GM12878 (cell line): ENCODE measurements at regions of chr19 and their contacts with region 1.

Region 1: DNA sequence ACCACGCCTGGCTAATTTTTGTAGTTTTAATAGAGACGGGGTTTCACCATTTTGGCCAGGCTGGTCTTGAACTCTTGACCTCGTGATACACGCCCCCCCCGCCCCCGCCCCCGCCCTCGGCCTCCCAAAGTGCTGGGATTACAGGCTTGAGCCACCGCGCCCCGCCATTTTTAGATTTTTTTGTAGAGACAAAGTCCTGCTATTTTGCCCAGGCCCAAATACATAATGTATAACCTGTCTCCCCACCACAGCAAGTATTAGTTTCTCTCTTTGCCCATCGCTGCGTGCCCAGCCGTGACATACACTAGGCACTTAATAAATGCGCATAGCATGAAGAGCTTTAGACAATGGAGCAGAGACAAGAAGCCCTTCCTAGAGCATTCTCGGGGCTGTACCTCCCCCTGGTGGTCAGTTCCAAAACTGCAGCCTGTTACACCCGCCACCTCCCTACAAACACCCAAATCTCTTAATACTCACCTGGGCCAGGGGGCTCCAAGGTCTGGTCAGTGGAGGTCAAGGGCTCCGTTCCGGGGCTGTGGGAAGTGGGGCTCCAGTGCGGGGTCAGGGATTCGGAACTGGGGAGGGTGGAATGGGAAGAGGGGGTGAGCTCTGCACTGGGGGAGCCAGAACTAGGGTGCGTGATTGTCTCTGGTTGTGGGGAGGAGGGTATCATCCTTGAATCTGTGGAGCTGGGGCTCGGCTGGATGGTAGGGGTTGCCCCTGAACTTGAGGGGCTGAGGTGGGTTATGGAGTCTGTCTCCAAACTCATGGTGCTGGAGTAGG is 22.5 kb downstream of the IQCN start:
- DNase-seq: peak; percentile 40
- ATAC-seq: peak; percentile 92
- H3K4me3 ChIP-seq: no peak overlapping the region
- H3K27ac ChIP-seq: no peak overlapping the region
- H3K4me1 ChIP-seq: peaks cover 5% of the 10 kb centered on the region
- H3K27me3 ChIP-seq: no peaks in the 10 kb centered on the region; a peak in 1 of 4 replicates
- CTCF ChIP-seq: peak; percentile 90 to 97 (median 96)
- EP300 ChIP-seq: no peak
- POLR2A ChIP-seq: no peak
- RAD21 ChIP-seq: peak; percentile 94

Region 2: DNA sequence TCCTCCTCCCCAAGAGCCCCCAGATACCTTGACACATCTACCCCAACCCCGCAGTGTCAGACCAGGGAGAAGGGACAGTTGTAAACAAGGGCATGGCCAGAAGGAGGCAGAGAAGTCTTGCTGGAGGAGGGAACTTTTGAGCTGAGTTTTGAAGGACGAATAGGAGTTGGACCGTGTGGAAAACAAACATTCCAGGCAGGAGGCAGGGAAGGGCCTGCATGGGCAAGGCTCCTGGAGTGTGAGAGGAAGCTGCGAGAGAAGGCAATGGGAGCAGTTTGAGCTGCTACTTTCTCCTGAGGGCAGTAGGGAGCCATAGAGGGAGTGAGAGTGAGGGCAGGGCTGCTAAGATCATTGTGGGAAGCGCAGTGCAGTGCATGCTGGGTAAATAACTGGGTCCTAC is 188.3 kb before region 1 on chr19:
- CTCF ChIA-PET with region 1: interaction called, 11 read pairs
- POLR2A ChIA-PET with region 1: no interaction called
- RAD21 ChIA-PET with region 1: interaction called, 4 read pairs
- SMC1A ChIA-PET with region 1: interaction called, 5 read pairs
- in situ Hi-C with region 1: no loop called
- intact Hi-C with region 1: no loop called
- DNase-seq: no peak
- ATAC-seq: peak; percentile 59
- H3K4me3 ChIP-seq: no peak overlapping the region
- H3K27ac ChIP-seq: no peak overlapping the region
- H3K4me1 ChIP-seq: no peaks in the 10 kb centered on the region
- H3K27me3 ChIP-seq: no peaks in the 10 kb centered on the region
- CTCF ChIP-seq: peak; percentile 59 to 67 (median 60)
- EP300 ChIP-seq: no peak
- POLR2A ChIP-seq: no peak
- RAD21 ChIP-seq: peak; percentile 74

Region 3: DNA sequence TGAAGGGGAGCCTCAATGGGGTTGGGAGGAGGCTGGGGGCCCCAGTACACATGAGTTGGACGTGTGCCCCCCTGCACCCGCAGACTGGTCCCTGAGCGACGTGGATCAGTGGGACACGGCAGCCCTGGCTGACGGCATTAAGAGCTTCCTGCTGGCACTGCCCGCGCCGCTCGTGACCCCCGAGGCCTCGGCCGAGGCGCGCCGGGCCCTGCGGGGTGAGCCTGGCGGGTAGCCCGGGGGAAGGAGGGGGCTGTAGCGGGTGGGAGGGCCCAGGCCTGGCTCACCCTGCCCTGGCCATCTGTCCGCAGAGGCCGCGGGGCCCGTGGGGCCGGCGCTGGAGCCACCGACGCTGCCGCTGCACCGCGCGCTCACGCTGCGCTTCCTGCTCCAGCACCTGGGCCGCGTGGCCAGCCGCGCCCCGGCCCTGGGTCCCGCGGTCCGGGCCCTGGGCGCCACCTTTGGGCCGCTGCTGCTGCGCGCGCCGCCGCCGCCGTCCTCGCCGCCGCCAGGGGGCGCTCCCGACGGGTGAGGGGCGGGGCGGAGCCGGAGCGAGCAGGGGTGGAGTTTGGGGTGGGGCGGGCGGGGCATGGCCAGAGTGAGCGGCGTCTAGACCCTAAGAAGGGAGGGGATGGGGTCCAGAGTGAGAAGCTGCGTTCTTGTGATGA is 90.7 kb before region 1 on chr19:
- CTCF ChIA-PET with region 1: interaction called, 11 read pairs
- POLR2A ChIA-PET with region 1: interaction called, 3 read pairs
- RAD21 ChIA-PET with region 1: interaction called, 4 read pairs
- SMC1A ChIA-PET with region 1: interaction called, 5 read pairs
- in situ Hi-C with region 1: no loop called
- intact Hi-C with region 1: no loop called
- DNase-seq: no peak
- ATAC-seq: peak; percentile 96
- H3K4me3 ChIP-seq: peak overlapping the region; percentile 70; the same call in 1 of the 2 replicates
- H3K27ac ChIP-seq: no peak overlapping the region; the same call in 1 of the 2 replicates
- H3K4me1 ChIP-seq: 0 out of 2 replicates have a peak, but pooled peaks cover 5% of the 10 kb centered on the region
- H3K27me3 ChIP-seq: no peaks in the 10 kb centered on the region
- CTCF ChIP-seq: peak; percentile 42 to 79 (median 55)
- EP300 ChIP-seq: no peak
- POLR2A ChIP-seq: peak; percentile 74; the same call in 1 of the 2 replicates
- RAD21 ChIP-seq: peak; percentile 48

Region 4: DNA sequence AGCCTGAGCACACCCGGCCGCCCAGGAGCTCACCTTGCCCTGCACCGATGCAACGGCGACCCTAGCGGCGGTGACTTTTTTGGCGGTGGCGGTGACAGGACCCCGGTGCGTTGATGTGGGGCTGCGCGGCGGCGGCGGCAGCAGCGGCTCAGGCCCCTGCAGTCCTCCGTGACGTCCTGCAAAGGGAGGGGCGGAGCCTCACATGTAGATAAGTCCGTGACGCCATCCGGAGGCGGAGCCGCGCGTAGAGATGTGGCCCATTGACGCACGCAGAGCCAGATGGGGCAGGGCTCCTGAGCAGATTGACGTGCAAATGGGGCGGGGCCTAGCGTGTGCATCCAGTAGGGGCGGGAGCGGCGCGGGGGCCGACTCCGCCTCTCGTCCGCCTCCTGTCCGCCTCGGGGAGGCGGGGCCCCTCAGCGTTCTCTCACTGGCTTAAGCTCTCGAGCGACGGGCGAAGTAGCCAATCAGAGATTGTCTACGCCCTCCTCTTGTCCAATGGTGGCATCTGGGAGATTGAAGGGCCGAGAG is 47.9 kb before region 1 on chr19 and contains the start of gene RAB3A:
- CTCF ChIA-PET with region 1: interaction called, 213 read pairs
- POLR2A ChIA-PET with region 1: interaction called, 3 read pairs
- RAD21 ChIA-PET with region 1: interaction called, 175 read pairs
- SMC1A ChIA-PET with region 1: interaction called, 121 read pairs
- in situ Hi-C with region 1: loop called (anchors 5 kb)
- intact Hi-C with region 1: loop called (anchors 1 kb)
- DNase-seq: peak; percentile 99
- ATAC-seq: peak; percentile 97
- H3K4me3 ChIP-seq: peak within 1 kb of the TSS; percentile 86
- H3K27ac ChIP-seq: peak within 1 kb of the TSS; percentile 68
- H3K4me1 ChIP-seq: peaks cover 6% of the 10 kb centered on the region
- H3K27me3 ChIP-seq: no peaks in the 10 kb centered on the region
- CTCF ChIP-seq: no peak
- EP300 ChIP-seq: no peak
- POLR2A ChIP-seq: peak; percentile 47; the same call in 1 of the 2 replicates
- RAD21 ChIP-seq: no peak
- polyA plus RNA-seq, gene RAB3A: 0.07 TPM in 1 of 2 experiments, not detected in the other

Region 5: DNA sequence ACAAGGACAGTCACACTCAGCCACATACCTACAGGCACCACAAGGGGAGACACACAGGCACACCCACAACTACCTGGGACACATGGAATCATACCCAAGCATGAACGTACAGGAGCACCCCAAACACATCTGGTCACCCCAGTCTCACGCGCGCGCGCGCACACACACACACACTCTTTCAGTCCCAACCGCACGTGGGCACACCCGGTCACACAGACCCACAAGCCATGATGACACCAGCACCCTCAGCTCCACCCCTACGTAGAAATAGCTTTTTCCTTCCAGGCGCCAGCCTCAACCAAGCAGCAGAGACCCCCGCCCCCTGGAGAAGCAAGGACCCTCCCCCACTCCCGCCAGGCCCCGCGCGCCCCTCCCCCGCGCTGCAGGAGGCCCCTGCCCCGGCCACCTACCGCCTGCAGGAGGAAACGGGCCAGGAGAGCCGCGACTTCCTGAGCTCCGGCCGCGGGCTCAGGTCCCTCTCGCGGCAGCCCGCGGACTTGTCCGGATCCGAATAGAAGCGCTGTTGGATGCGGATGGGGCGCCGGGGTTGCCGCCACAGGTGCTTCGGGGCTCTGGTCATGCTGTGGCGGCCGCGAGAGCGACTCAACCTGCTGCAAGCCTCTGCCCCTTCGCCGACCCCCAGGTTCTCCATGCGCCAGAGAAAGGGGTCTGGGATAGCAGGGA is 19.1 kb before region 1 on chr19:
- CTCF ChIA-PET with region 1: interaction called, 12 read pairs
- POLR2A ChIA-PET with region 1: interaction called, 5 read pairs
- RAD21 ChIA-PET with region 1: interaction called, 12 read pairs
- SMC1A ChIA-PET with region 1: interaction called, 5 read pairs
- in situ Hi-C with region 1: no loop called
- intact Hi-C with region 1: no loop called
- DNase-seq: no peak
- ATAC-seq: no peak
- H3K4me3 ChIP-seq: no peak overlapping the region
- H3K27ac ChIP-seq: no peak overlapping the region
- H3K4me1 ChIP-seq: 0 out of 2 replicates have a peak, but pooled peaks cover 4% of the 10 kb centered on the region
- H3K27me3 ChIP-seq: no peaks in the 10 kb centered on the region; a peak in 2 of 4 replicates
- CTCF ChIP-seq: no peak
- EP300 ChIP-seq: no peak
- POLR2A ChIP-seq: no peak
- RAD21 ChIP-seq: no peak

Region 6: GRCh38 chr19:18262917-18263316 is 11.1 kb after region 1 on chr19:
- CTCF ChIA-PET with region 1: interaction called, 13 read pairs
- POLR2A ChIA-PET with region 1: interaction called, 3 read pairs
- RAD21 ChIA-PET with region 1: interaction called, 3 read pairs
- SMC1A ChIA-PET with region 1: interaction called, 4 read pairs
- in situ Hi-C with region 1: no loop called
- intact Hi-C with region 1: no loop called
- DNase-seq: no peak
- ATAC-seq: no peak
- H3K4me3 ChIP-seq: no peak overlapping the region
- H3K27ac ChIP-seq: no peak overlapping the region
- H3K4me1 ChIP-seq: no peaks in the 10 kb centered on the region
- H3K27me3 ChIP-seq: no peaks in the 10 kb centered on the region
- CTCF ChIP-seq: no peak
- EP300 ChIP-seq: no peak
- POLR2A ChIP-seq: no peak
- RAD21 ChIP-seq: no peak

Region 7: GRCh38 chr19:18328340-18329034 is 76.7 kb after region 1 on chr19:
- CTCF ChIA-PET with region 1: interaction called, 42 read pairs
- POLR2A ChIA-PET with region 1: no interaction called
- RAD21 ChIA-PET with region 1: interaction called, 19 read pairs
- SMC1A ChIA-PET with region 1: interaction called, 29 read pairs
- in situ Hi-C with region 1: no loop called
- intact Hi-C with region 1: no loop called
- DNase-seq: peak; percentile 91
- ATAC-seq: peak; percentile 100
- H3K4me3 ChIP-seq: peak overlapping the region; percentile 64
- H3K27ac ChIP-seq: peak overlapping the region; percentile 27
- H3K4me1 ChIP-seq: peaks cover 4% of the 10 kb centered on the region
- H3K27me3 ChIP-seq: no peaks in the 10 kb centered on the region
- CTCF ChIP-seq: peak; percentile 89 to 98 (median 95)
- EP300 ChIP-seq: no peak
- POLR2A ChIP-seq: no peak
- RAD21 ChIP-seq: peak; percentile 91